Posterior vena cava (tissue), 2 donors: ENCODE measurements at regions of chr12 and their contacts with region 1.

Region 1: DNA sequence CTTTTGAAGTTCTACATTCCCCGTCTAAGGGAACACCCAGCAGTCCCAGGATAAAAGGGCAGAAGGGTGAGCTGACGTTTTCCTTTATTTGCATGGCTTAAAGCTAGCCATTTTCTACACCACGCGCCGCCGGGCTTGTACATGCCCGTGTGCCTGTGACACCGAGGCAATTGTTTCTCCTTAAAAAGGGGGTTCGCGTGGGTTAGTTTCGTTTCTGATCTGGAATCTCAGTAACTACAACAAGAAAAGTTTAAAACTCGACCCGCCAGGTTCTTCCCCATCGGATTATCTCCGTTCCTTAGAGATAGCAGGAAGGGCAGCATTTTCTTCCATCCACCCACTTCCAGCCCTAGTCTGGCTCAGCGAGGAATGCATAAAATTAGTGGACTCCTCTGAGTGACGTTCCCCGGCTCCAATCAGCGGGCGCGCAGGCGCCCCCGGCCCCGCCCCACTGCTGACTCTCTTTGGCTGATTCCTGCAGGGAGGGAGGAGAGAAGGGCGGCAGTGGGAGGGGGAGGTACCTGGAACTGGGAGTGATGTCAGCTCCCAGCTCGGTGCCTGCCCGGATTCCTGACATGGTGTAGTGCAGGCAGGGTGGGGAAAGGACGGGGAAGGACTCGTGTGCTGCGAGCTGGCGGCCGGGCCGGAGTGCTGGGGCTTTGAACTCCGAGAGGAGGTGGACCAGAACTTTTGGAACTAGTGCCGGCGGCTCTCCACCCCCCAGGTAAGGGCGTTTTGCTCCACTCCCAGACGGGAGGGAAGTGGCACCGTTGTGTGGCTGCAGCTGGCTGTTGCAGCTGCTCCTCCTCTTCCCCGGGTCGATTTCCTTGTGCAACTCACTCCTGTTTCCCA is at the start of gene PPFIBP1:
- DNase-seq: peak; percentile 99
- total RNA-seq, gene PPFIBP1: 77.5 to 105 TPM

Region 2: GRCh38 chr12:26422839-26423398 is 1100.9 kb before region 1 on chr12:
- intact Hi-C with region 1: loop called in 1 of 2 experiments (anchors 5 kb)
- DNase-seq: no peak

Region 3: DNA sequence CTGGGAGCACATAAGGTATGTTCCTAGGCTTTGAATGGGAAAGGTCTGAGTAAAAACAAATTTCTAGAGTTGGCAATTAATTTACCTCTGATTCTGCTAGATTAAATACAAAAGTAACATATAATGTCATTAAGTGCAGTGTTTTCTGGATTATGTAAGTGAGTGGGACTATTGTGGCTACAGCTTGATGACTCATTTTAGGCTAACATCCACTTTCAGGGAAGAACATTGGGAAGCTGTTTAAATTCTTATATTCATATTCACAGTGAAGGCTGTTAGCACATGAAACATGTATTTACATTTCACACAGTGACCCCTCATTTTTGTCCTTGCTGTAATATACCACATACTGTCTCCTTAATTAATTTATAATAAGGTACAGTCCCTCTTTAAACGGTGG is 204.5 kb before region 1 on chr12:
- intact Hi-C with region 1: no loop called
- DNase-seq: no peak

Region 4: DNA sequence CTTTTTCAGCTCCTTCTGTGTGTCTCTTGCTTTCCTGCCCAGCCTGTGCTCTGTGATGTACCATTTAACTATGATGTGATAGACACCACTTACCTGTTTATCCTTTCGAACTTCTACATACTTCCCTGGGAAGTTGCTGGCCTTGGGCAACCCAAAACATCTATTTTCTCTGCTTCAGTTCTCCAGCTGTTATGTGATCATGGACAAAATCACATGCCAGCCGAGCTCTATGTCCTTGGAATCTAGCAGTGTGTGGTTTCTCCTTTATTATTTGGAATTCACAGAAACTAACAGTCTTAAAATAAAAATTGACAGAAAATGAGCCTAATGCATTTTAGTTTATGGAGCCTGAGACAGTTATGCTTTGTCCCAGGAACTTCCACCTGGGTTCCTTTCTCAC is 168.4 kb before region 1 on chr12:
- intact Hi-C with region 1: no loop called
- DNase-seq: no peak

Region 5: GRCh38 chr12:27619308-27619707 is 95.4 kb after region 1 on chr12:
- intact Hi-C with region 1: loop called in 1 of 2 experiments (anchors 10 kb)
- DNase-seq: no peak